Stomach (tissue), 19 donors: ENCODE measurements at regions of chr3 and their contacts with region 1.

Region 1: GRCh38 chr3:113575206-113575605 is 42.9 kb downstream of the SIDT1 start:
- DNase-seq: peak in 1 of 2 donors; percentile 27
- H3K4me3 ChIP-seq: no peak overlapping the region
- H3K27ac ChIP-seq: no peak overlapping the region
- H3K4me1 ChIP-seq: no peaks in the 10 kb centered on the region
- H3K27me3 ChIP-seq: no peaks in the 10 kb centered on the region
- CTCF ChIP-seq: no peak
- EP300 ChIP-seq: no peak
- POLR2A ChIP-seq: no peak

Region 2: DNA sequence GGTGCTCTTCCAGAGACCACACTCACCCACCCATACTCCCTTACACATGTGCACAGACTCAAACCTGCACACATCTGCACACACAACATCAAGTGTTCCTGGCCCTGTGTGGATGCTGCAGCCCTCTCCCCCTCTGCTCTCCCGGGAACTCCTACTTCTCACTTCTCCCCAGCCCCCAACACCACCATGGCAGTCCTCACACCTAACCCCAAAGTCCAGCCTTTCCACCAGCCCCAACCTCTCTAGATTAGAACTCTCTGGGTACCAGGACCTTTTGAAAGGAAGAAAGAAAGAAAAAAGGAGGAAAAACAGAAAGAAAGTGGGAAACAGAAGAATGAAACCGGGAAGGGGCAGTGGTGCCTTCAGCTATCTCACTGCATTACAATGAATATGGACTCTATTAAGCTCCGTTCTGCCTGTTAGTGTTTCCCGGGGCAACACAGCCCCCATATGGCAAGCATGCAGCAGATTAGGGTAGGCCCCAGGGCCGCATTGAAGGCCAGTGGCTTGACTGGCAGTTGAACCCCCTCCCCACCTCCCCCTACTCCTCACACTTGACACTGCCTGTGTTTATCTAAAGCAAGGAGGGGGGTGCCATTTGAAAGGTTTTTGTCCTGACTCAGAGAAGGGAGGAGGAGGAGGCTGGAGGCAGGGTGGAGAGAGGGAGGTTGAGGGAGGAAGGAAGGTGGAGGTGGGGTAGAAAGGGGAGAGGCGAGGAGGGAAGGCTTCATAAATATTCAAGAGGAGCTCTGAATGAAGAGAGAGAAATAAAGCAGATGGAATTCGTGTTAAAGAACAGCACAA is 333.7 kb before region 1 on chr3:
- intact Hi-C with region 1: no loop called
- DNase-seq: peak in 1 of 2 donors; percentile 55
- H3K4me3 ChIP-seq: no peak overlapping the region
- H3K27ac ChIP-seq: peak overlapping the region in 4 of 5 donors; percentile 38 to 74 (median 56)
- H3K4me1 ChIP-seq: peaks cover 0 to 51% (median 21%) of the 10 kb centered on the region in 4 donors
- H3K27me3 ChIP-seq: no peaks in the 10 kb centered on the region
- CTCF ChIP-seq: no peak
- EP300 ChIP-seq: no peak
- POLR2A ChIP-seq: no peak

Region 3: GRCh38 chr3:113454057-113454456 is 121.1 kb before region 1 on chr3:
- intact Hi-C with region 1: no loop called
- DNase-seq: no peak
- H3K4me3 ChIP-seq: no peak overlapping the region
- H3K27ac ChIP-seq: no peak overlapping the region
- H3K4me1 ChIP-seq: no peaks in the 10 kb centered on the region
- H3K27me3 ChIP-seq: no peaks in the 10 kb centered on the region
- CTCF ChIP-seq: no peak
- EP300 ChIP-seq: no peak
- POLR2A ChIP-seq: no peak

Region 4: DNA sequence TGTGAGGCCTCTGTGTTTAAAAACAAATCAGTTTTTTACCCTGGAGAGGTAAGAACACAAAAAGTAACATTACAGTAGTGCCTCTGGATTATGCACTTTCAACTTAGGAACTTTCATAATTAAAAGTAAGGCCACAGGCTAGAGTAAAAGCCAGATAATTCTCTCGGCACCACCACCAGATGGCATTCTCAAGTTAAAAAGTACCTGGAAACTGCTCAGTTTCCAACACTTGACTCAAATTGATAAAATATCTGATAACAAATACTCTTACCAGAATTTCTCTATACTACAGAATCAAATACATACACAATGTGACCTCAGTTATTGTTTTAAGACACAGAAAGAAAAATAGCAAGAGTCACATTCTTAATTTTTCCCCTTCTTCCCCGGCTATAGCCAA is 80.2 kb before region 1 on chr3:
- intact Hi-C with region 1: loop called (anchors 5 kb)
- DNase-seq: peak in 1 of 2 donors; percentile 65
- H3K4me3 ChIP-seq: no peak overlapping the region
- H3K27ac ChIP-seq: no peak overlapping the region
- H3K4me1 ChIP-seq: peaks cover 0 to 5% (median 0%) of the 10 kb centered on the region in 4 donors
- H3K27me3 ChIP-seq: no peaks in the 10 kb centered on the region
- CTCF ChIP-seq: peak in 4 of 7 experiments; percentile 24 to 43 (median 31)
- EP300 ChIP-seq: no peak
- POLR2A ChIP-seq: no peak